Endothelial cell of umbilical vein (primary cell): ENCODE measurements at regions of chr7 and their contacts with region 1.

Region 1: GRCh38 chr7:116687801-116688201 is 15.8 kb downstream of the MET start:
- DNase-seq: peak; percentile 90
- H3K4me3 ChIP-seq: no peak overlapping the region
- H3K27ac ChIP-seq: peak overlapping the region; percentile 69
- H3K4me1 ChIP-seq: peaks cover 44% of the 10 kb centered on the region
- H3K27me3 ChIP-seq: no peaks in the 10 kb centered on the region
- CTCF ChIP-seq: no peak
- POLR2A ChIP-seq: no peak

Region 2: DNA sequence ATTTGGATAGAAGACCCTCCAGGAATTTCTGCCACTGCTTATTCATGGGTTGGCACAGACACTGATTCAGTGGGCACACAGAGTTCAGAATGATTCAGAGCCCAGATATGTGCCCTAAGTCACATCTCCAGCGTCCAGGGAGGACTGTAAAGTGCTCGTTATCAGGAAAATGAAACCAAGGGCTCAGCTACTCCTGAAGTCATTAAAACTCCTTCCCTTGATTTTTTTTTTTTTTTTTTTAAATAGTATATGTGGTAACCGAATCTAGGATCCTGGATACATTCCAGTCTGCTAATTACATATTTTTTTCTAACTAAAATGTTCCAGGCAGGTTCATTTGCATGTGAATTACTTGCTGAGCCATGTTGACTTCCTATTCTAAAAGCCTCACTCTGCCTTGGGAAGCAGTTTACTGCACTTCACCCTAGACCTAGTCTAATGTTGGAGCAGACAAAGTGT is 18.9 kb after region 1 on chr7:
- CTCF ChIA-PET with region 1: interaction called, 3 read pairs
- POLR2A ChIA-PET with region 1: interaction called, 3 read pairs
- dilution Hi-C with region 1: no loop called
- intact Hi-C with region 1: loop called (anchors 1 kb)
- DNase-seq: peak; percentile 82
- H3K4me3 ChIP-seq: peak overlapping the region in 2 of 3 experiments; percentile 9 to 52
- H3K27ac ChIP-seq: peak overlapping the region; percentile 76
- H3K4me1 ChIP-seq: peaks cover 42% of the 10 kb centered on the region
- H3K27me3 ChIP-seq: no peaks in the 10 kb centered on the region
- CTCF ChIP-seq: no peak
- POLR2A ChIP-seq: no peak